ENCODE measurements at regions of chr16 and their contacts with region 1.

Region 1: GRCh38 chr16:55465077-55465896 is 13.7 kb upstream of the MMP2 start:
- DNase-seq: peak; percentile 91
- ATAC-seq: peak; percentile 95
- H3K4me3 Mint-ChIP-seq: no peak overlapping the region
- H3K27ac Mint-ChIP-seq: no peak overlapping the region
- H3K4me1 Mint-ChIP-seq: no peaks in the 10 kb centered on the region
- H3K27me3 Mint-ChIP-seq: peaks cover 11% of the 10 kb centered on the region

Region 2: DNA sequence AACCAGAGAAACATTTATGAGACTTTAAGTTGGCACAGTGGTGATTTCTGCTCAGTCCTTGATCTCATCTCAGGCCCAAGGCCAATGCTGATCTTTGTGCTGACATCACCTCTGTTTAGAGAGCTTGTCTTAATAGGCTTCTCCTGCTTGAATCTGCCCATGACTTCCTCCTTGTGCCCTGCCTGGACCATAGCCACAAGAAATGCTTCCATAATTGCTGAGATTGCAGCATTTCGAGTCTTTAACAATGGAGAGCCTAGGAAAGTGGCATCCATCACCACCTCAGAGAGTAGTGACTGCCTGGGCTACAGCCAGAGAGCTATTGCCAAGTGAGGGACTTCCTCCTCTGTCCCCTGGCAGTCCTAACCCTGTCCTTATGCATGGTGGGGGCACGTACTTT is 11.4 kb before region 1 on chr16:
- CTCF ChIA-PET with region 1: interaction called, 14 read pairs
- POLR2A ChIA-PET with region 1: no interaction called
- intact Hi-C with region 1: no loop called
- DNase-seq: no peak
- ATAC-seq: no peak
- H3K4me3 Mint-ChIP-seq: no peak overlapping the region
- H3K27ac Mint-ChIP-seq: no peak overlapping the region
- H3K4me1 Mint-ChIP-seq: no peaks in the 10 kb centered on the region
- H3K27me3 Mint-ChIP-seq: peaks cover 5% of the 10 kb centered on the region

Region 3: DNA sequence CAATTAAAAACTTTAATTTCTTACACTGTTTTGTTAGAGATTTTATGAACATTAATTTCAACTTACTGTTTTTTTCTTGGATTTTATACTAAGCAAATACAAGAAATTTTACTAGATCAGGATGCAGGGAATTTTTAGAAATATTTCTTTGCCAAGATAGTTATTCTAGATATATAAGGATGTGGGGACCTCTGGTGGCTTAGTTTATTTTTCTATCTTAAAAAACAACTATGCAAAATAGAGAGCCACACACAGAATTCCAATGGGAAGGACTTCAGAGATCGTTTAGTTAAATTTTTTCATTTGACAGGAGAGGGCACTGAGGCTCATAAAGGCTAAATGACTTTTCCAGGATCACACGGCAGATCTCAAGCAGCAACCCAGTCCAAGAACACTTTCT is 78.2 kb after region 1 on chr16:
- CTCF ChIA-PET with region 1: interaction called, 27 read pairs
- POLR2A ChIA-PET with region 1: no interaction called
- intact Hi-C with region 1: loop called (anchors 1 kb)
- DNase-seq: no peak
- ATAC-seq: no peak
- H3K4me3 Mint-ChIP-seq: no peak overlapping the region
- H3K27ac Mint-ChIP-seq: no peak overlapping the region
- H3K4me1 Mint-ChIP-seq: no peaks in the 10 kb centered on the region
- H3K27me3 Mint-ChIP-seq: no peaks in the 10 kb centered on the region

Region 4: DNA sequence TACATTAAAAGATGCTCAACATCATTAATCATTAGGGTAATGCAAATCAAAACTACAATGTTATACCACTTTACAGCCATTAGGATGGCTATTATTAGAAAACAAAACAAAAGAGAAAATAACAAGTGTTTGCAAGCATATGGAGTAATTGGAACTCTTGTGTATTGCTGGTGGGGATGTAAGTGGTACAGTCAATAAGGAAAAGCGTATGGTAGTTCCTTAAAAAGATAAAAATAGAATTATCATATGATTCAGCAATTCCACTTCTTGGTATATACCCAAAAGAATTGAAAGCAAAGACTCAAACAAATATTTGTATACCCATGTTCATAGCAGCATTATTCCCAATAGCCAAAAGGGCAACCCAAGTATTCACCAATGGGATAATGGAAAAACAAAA is 99.8 kb after region 1 on chr16:
- CTCF ChIA-PET with region 1: no interaction called
- POLR2A ChIA-PET with region 1: no interaction called
- intact Hi-C with region 1: no loop called
- DNase-seq: no peak
- ATAC-seq: no peak
- H3K4me3 Mint-ChIP-seq: no peak overlapping the region
- H3K27ac Mint-ChIP-seq: no peak overlapping the region
- H3K4me1 Mint-ChIP-seq: no peaks in the 10 kb centered on the region
- H3K27me3 Mint-ChIP-seq: peaks cover 12% of the 10 kb centered on the region

Region 5: DNA sequence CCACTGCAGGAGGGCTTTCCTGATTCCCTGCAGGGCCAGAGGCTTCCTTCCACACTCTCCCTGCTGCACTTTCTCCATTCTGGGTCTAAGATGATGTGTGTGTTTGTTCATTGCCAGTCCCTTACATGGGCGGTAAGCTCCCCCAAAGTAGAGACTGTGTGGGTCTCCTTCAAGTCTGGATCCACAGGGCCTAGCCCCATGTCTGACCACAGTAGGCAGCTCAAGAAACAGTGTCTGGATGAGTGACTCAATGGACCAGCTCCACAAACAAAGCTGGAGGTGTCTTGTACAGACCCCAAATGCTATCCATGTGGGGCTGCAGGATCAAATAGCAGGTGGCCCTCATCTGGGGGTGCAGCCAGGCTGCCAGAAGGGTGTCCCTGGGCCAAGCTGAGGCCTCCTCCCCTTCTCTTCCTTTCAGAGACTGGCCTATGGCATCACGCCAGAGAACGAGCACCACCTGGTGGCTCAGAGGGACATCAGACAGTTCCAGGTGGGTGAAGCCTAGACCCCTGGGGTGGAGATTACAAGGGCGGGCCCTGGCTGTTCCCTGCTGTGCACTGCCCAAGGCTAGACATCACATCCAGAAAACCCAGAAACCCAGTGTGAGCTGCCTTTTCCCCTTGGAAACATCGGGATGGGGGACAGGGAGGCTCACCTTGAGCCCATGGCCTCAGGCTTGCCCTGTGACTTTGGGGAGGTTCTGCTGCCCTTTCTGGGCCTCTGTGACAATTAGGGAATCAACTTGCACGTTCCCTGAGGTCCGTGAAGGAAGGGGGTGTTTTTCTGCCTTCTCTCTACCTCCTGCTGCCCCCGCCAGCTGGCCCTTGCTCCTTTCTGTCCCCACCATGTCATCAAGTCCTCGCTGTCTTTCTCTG is 236.4 kb after region 1 on chr16:
- CTCF ChIA-PET with region 1: interaction called, 112 read pairs
- POLR2A ChIA-PET with region 1: no interaction called
- intact Hi-C with region 1: loop called (anchors 1 kb)
- DNase-seq: peak; percentile 75
- ATAC-seq: peak; percentile 66
- H3K4me3 Mint-ChIP-seq: no peak overlapping the region
- H3K27ac Mint-ChIP-seq: no peak overlapping the region
- H3K4me1 Mint-ChIP-seq: peaks cover 2% of the 10 kb centered on the region
- H3K27me3 Mint-ChIP-seq: peaks cover 4% of the 10 kb centered on the region

Region 6: GRCh38 chr16:55842369-55843104 is 377.2 kb after region 1 on chr16:
- CTCF ChIA-PET with region 1: interaction called, 8 read pairs
- POLR2A ChIA-PET with region 1: no interaction called
- intact Hi-C with region 1: loop called (anchors 1 to 2 kb)
- DNase-seq: peak; percentile 27
- ATAC-seq: peak; percentile 44
- H3K4me3 Mint-ChIP-seq: no peak overlapping the region
- H3K27ac Mint-ChIP-seq: no peak overlapping the region
- H3K4me1 Mint-ChIP-seq: no peaks in the 10 kb centered on the region
- H3K27me3 Mint-ChIP-seq: peaks cover 17% of the 10 kb centered on the region

Region 7: GRCh38 chr16:56087661-56088060 is 622.4 kb after region 1 on chr16:
- CTCF ChIA-PET with region 1: no interaction called
- POLR2A ChIA-PET with region 1: no interaction called
- intact Hi-C with region 1: no loop called
- DNase-seq: no peak
- ATAC-seq: no peak
- H3K4me3 Mint-ChIP-seq: no peak overlapping the region
- H3K27ac Mint-ChIP-seq: no peak overlapping the region
- H3K4me1 Mint-ChIP-seq: no peaks in the 10 kb centered on the region
- H3K27me3 Mint-ChIP-seq: peaks cover 16% of the 10 kb centered on the region

Region 8: DNA sequence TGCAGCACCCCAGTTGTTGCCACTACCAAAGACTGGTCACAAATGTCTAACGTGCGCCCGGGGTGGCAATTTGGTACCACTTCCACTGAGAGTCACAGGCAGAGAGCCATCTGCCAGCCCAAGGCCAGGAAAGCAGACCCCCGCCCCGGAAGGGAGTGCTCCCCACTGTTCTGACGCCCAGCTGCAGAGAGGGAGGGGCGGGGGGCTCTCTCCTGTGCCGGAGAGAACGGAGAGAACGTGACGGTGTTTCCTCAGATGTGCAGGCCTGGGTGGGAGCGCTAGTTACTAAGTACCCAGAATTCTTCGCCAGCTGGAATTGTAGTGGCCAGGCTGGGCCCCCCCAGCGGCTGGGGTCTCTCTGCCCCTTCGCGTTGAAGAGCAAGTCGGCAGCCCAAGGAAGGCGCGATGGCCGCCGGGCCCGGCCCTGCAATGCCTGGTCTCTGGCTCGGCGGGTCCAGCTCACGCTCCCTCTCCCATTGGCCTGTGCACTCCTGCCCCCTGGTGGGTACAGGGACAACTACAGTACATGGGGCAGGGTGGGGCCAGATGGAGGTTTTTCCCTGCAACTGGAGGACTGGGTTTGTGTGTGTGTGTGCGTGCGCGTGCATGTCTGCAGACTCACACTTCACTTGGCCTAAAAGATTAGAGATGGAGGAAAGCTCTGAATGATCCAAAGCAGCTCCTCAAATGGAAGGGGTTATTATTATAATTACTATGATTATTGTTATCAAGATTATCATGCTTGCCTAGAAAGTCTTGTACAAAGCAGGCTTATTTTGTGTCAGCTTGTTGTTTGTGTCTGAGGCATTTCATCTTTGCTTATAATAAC is 852.9 kb after region 1 on chr16:
- CTCF ChIA-PET with region 1: interaction called, 4 read pairs
- POLR2A ChIA-PET with region 1: no interaction called
- intact Hi-C with region 1: loop called (anchors 2 to 10 kb)
- DNase-seq: peak; percentile 89
- ATAC-seq: peak; percentile 99
- H3K4me3 Mint-ChIP-seq: no peak overlapping the region
- H3K27ac Mint-ChIP-seq: no peak overlapping the region
- H3K4me1 Mint-ChIP-seq: peaks cover 4% of the 10 kb centered on the region
- H3K27me3 Mint-ChIP-seq: peaks cover 4% of the 10 kb centered on the region